Gastrocnemius medialis (tissue), 4 donors: ENCODE measurements at regions of chr20 and their contacts with region 1.

Region 1: DNA sequence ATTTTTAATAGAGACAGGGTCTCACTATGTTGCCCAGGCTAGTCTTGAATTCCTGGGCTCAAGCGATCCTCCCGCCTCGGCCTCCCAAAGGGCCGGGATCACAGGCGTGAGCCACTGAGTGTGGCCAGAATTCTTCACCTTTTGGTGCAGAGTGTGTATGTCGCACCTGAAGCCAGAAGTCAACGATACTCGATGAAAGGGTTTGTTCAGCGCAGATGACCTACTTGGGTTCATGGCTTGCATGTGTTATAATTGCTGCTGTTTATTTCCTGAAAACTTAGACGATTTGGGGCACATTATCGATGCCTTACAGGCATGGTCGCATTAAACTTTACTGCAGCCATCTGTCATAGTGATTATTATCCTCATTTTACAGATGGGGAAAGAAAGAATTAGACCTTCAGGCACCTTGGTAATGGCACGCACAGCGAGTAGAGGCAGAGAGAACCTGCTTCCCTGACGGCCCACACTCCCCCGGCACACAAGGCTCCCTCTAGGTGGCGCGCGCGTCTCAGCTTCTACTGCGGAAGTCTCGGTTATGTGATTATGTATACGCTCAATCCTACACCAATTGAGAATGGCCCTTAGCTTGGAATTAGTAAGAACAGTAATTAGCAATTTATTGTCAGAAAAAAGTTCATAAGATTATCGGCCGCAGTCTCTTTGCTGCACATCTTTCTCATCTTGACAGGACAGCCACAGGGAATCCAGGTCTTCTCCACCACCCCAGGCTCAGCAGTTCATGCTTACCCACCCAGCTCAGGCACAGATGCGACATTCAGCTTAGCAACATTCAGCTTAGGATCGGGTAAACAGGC is 212.8 kb upstream of the PROKR2 start:
- DNase-seq: peak; percentile 40 to 63
- ATAC-seq: peak; percentile 73 to 77
- H3K4me3 ChIP-seq: peak overlapping the region in 1 of 4 donors; percentile 29
- H3K27ac ChIP-seq: no peak overlapping the region
- H3K4me1 ChIP-seq: peaks cover 0 to 8% of the 10 kb centered on the region in 2 donors
- H3K27me3 ChIP-seq: no peaks in the 10 kb centered on the region
- CTCF ChIP-seq: peak; percentile 29 to 73 (median 52)
- POLR2A ChIP-seq: no peak

Region 2: DNA sequence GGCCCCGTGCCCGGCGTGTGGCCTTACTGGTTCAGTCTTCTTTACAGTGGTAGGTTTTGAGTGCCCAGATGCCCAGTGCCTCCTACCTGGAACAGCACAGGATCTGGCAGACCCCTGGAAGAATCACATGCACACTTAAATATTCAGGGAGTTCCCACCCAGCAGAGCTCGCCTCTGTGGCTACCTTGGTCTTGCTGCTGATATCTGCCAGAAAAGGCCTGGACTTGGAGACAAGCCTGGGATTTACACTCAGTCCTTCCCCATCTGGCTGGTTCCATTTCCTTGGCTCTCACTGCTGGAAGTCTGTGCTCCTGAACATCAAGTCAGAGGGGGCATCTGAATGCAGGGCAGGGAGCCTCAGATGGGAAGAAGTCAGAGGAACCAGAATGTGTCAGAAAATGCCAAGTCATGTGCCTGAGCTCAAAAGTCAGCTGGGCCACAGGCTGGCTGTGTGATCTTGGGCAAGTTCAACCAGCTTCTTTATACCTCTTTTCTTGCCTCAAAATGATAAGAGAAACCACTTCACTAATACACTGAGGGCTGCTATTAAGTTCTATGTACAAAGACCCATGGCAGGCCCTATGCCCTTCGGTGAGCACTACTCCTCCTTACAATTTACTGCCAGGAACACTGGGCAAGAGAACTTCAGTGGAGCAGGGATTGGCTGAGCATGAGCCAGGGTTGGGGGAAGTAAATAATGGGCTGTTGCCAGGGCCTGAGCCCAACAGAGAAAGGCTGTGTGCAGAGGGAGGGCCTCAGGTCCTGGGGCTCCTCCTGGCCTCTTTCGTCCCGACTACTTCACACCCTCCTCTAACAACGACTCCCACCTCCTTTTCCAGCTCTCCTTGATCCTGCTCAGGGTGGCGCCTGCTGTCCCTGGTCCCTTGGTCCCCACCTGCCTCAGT is 54.6 kb before region 1 on chr20:
- in situ Hi-C with region 1: no loop called
- intact Hi-C with region 1: no loop called
- DNase-seq: no peak
- ATAC-seq: no peak
- H3K4me3 ChIP-seq: no peak overlapping the region
- H3K27ac ChIP-seq: no peak overlapping the region
- H3K4me1 ChIP-seq: no peaks in the 10 kb centered on the region
- H3K27me3 ChIP-seq: no peaks in the 10 kb centered on the region
- CTCF ChIP-seq: no peak
- POLR2A ChIP-seq: no peak

Region 3: DNA sequence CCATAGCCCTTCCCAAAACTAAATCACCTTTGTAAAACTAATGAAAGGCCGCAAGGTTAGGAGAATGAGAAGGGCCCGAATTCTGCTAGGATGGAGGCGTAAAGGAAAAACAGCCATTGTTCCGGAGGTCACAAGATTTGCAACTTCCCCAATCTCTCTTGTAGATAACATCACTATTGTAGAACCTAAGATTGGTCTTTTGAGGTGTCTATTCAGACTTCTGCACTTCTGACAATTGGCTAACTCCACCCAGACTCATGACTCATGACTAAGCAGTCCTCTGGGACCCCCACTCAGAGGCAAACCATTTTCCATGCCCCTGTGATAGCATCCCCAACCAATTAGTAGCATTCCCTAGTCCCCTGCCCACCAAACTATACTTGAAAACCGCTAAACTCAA is 10.2 kb after region 1 on chr20:
- in situ Hi-C with region 1: no loop called
- intact Hi-C with region 1: no loop called
- DNase-seq: no peak
- ATAC-seq: no peak
- H3K4me3 ChIP-seq: no peak overlapping the region
- H3K27ac ChIP-seq: no peak overlapping the region
- H3K4me1 ChIP-seq: no peaks in the 10 kb centered on the region
- H3K27me3 ChIP-seq: no peaks in the 10 kb centered on the region
- CTCF ChIP-seq: no peak
- POLR2A ChIP-seq: no peak

Region 4: GRCh38 chr20:5567644-5568043 is 38.1 kb after region 1 on chr20:
- in situ Hi-C with region 1: no loop called
- intact Hi-C with region 1: no loop called
- DNase-seq: no peak
- ATAC-seq: no peak
- H3K4me3 ChIP-seq: no peak overlapping the region
- H3K27ac ChIP-seq: no peak overlapping the region
- H3K4me1 ChIP-seq: no peaks in the 10 kb centered on the region
- H3K27me3 ChIP-seq: no peaks in the 10 kb centered on the region
- CTCF ChIP-seq: no peak
- POLR2A ChIP-seq: no peak

Region 5: GRCh38 chr20:5608442-5609161 is 79.1 kb after region 1 on chr20:
- in situ Hi-C with region 1: no loop called
- intact Hi-C with region 1: loop called (anchors 5 kb)
- DNase-seq: no peak
- ATAC-seq: no peak
- H3K4me3 ChIP-seq: peak overlapping the region in 2 of 4 donors; percentile 78 to 84
- H3K27ac ChIP-seq: peak overlapping the region; percentile 86 to 96 (median 92)
- H3K4me1 ChIP-seq: peaks cover 15 to 22% of the 10 kb centered on the region in 2 donors
- H3K27me3 ChIP-seq: no peaks in the 10 kb centered on the region
- CTCF ChIP-seq: no peak
- POLR2A ChIP-seq: no peak

Region 6: DNA sequence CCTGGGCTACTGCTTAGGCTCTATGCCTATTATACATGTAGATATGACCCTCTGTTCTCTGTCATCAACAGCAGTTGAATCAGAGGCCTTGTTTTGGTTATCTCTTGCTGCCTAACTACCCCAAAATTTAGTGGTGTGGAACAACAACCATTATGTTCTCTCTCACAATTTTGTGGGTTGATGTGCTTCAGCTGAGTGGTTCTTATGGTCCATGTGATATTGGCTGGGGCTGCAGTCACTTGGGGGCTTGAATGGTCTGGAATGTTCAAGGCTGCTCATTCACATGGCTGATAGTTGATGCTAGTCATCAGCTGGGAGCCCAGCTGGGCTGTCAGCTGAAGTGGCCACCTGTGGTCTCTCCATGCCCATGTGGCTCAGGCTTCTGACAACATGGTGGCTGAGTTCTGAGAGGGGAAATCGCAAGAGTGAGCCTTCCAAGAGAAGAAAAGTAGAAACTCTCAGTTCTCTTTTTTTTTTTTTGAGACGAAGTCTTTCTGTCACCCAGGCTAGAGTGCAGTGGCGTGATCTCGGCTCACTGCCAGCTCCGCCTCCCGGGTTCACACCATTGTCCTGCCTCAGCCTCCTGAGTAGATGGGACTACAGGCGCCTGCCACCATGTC is 268.4 kb after region 1 on chr20:
- in situ Hi-C with region 1: loop called in 1 of 4 experiments (anchors 10 kb)
- intact Hi-C with region 1: no loop called
- DNase-seq: no peak
- ATAC-seq: no peak
- H3K4me3 ChIP-seq: no peak overlapping the region
- H3K27ac ChIP-seq: no peak overlapping the region
- H3K4me1 ChIP-seq: no peaks in the 10 kb centered on the region
- H3K27me3 ChIP-seq: no peaks in the 10 kb centered on the region
- CTCF ChIP-seq: no peak
- POLR2A ChIP-seq: no peak

Region 7: GRCh38 chr20:5950271-5951031 is 420.9 kb after region 1 on chr20 and contains the starts of genes MCM8 and TRMT6:
- in situ Hi-C with region 1: loop called in 2 of 4 experiments (anchors 25 kb)
- intact Hi-C with region 1: loop called (anchors 5 kb)
- DNase-seq: peak; percentile 94 to 95
- ATAC-seq: peak; percentile 97 to 98
- H3K4me3 ChIP-seq: peak within 1 kb of the TSS; percentile 63 to 90 (median 84)
- H3K27ac ChIP-seq: peak within 1 kb of the TSS; percentile 85 to 89 (median 86)
- H3K4me1 ChIP-seq: peaks cover 16 to 18% of the 10 kb centered on the region in 2 donors
- H3K27me3 ChIP-seq: no peaks in the 10 kb centered on the region
- CTCF ChIP-seq: peak in 1 of 5 experiments; percentile 24
- POLR2A ChIP-seq: peak; percentile 60 to 67
- total RNA-seq, gene MCM8: 2.4 to 5.9 (median 5.2) TPM
- total RNA-seq, gene TRMT6: 16.5 to 27.5 (median 19.0) TPM

Region 8: GRCh38 chr20:6074145-6074561 is 544.6 kb after region 1 on chr20:
- in situ Hi-C with region 1: loop called (anchors 5 to 25 kb)
- intact Hi-C with region 1: loop called (anchors 2 kb)
- DNase-seq: no peak
- ATAC-seq: no peak
- H3K4me3 ChIP-seq: no peak overlapping the region
- H3K27ac ChIP-seq: no peak overlapping the region
- H3K4me1 ChIP-seq: peaks cover 6 to 8% of the 10 kb centered on the region in 2 donors
- H3K27me3 ChIP-seq: no peaks in the 10 kb centered on the region
- CTCF ChIP-seq: no peak
- POLR2A ChIP-seq: no peak